ENCODE measurements at regions of chr5 and their contacts with region 1.

Region 1: DNA sequence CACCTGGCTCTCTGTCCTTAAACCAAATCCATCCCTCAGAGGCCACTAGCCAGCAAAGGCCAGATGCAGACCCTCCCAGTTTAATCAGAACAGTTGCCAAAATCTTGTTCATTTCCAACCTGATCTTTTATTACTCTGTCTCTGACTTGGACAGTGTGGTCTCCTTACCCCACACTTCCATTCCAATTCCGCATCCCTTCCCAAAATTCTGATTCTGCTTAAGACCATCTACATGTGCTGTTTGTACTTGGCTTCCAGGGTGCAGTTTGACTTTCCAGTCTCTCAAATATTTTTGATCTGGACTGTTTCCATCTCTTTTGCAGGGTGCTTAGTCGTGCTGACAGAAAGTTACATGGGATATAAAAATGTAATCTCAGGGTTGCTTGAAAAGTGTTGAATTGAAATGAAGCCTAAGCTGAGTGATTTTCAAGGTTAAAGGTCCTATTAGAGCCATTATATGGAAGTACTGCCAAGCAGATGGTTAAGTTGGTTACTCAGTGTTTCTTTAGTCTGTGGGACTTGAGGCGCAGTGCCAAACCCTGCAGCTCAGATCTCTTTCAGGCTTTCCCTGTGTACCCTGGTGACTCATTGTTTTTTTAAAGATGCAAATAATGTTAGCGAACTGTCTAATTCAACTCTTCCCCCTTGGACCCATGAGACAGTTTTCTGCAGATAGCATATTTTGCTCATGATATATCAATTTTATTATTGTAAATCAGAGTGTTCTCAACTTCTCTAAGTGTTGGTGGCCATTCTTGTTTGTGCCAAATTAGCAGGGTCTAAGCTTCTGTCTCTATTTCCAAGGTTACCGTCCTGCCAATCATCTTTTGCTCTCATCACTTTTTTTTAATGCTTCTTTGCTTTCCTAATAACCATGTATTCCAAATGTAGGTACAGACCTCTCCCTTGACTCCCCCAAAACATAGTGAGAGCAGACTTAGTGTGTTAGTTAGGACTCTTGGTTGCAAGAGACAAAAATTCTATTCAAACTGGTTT is 18.2 kb upstream of the DCP2 start:
- DNase-seq: peak; percentile 81 to 88
- ATAC-seq: peak; percentile 92
- H3K4me3 ChIP-seq: peak overlapping the region; percentile 15; the same call in 2 of the 3 replicates
- H3K27ac ChIP-seq: peak overlapping the region; percentile 67 to 78
- H3K4me1 ChIP-seq: peaks cover 53% of the 10 kb centered on the region
- CTCF ChIP-seq: no peak
- EP300 ChIP-seq: peak; percentile 30 to 50; a peak in 2 of 5 replicates
- POLR2A ChIP-seq: no peak
- RAD21 ChIP-seq: no peak

Region 2: GRCh38 chr5:112976432-112977309 is 18.3 kb after region 1 on chr5 and contains the start of gene DCP2:
- CTCF ChIA-PET with region 1: interaction called, 7 read pairs
- POLR2A ChIA-PET with region 1: interaction called, 13 read pairs
- DNase-seq: peak; percentile 99
- ATAC-seq: peak; percentile 96 to 99
- H3K4me3 ChIP-seq: peak within 1 kb of the TSS; percentile 86
- H3K27ac ChIP-seq: peak within 1 kb of the TSS; percentile 88 to 93
- H3K4me1 ChIP-seq: peaks cover 22% of the 10 kb centered on the region
- CTCF ChIP-seq: no peak
- EP300 ChIP-seq: no peak
- POLR2A ChIP-seq: peak; percentile 69
- RAD21 ChIP-seq: no peak
- polyA plus RNA-seq, gene DCP2: 16.1 and 18.5 TPM in 2 replicates